Posterior vena cava (tissue), 2 donors: ENCODE measurements at regions of chr13 and their contacts with region 1.

Region 1: DNA sequence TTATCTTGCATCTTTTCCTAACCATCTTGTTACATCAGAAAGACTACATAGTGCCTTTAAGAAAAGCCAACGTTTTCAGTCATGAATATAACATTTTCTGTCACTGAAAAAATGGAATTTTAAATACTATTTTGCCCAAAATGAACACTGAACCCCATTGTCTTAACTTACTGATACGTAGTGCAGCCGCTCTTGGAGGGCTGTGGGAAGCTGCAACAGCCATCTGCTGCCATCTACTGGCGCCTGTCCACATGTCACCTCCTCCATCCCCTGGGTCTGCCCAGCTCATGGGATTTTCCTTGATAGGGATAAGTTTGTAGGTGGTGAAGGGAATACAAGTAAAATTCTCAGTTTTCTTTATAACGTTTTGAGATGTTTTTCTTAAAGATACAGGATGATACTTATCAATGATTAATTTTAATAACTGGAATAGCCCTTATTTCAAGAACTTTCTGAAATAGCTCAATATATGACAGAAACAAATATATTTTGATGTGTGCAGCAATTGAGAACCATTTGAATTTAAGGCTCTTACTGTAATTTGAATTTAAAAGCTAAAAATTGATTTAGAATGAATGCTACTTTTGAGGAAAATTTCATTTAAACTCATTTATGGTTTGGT is 73.7 kb downstream of the GGACT start:
- DNase-seq: peak; percentile 93

Region 2: GRCh38 chr13:99656092-99656745 is 858.7 kb before region 1 on chr13:
- intact Hi-C with region 1: loop called (anchors 5 to 10 kb)
- DNase-seq: no peak

Region 3: GRCh38 chr13:99916366-99917103 is 598.4 kb before region 1 on chr13:
- intact Hi-C with region 1: loop called in 1 of 2 experiments (anchors 10 kb)
- DNase-seq: no peak

Region 4: DNA sequence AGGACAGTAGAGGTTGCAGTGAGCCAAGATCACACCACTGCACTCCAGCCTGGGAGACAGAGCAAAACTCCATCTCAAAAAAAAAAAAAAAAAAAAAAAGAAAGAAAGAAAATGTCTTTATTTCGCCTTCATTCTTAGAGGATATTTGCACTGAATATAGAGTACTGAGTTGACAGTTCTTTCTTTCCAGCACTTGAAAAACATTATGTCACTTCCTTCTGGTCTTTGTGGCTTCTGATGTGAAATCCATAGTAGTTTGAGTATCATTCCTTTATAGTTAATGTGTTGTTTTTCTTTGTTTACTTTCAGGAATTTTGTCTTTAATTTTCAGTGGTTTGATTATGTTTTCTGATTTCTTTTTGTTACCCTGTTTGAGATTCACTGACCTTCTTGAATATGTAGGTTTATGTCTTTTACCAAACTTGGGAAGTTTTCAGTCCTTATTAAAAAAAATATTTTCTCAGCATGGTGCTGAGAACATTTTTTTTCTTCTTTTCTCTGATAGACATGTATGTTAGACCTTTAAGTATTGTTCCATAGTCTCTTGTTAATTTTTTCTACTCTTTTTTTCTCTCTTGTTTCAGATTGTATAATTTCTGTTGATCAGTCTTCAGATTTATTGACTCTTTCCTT is 375.9 kb before region 1 on chr13:
- intact Hi-C with region 1: no loop called
- DNase-seq: no peak

Region 5: GRCh38 chr13:100235311-100235901 is 279.5 kb before region 1 on chr13:
- intact Hi-C with region 1: loop called in 1 of 2 experiments (anchors 10 kb)
- DNase-seq: no peak

Region 6: DNA sequence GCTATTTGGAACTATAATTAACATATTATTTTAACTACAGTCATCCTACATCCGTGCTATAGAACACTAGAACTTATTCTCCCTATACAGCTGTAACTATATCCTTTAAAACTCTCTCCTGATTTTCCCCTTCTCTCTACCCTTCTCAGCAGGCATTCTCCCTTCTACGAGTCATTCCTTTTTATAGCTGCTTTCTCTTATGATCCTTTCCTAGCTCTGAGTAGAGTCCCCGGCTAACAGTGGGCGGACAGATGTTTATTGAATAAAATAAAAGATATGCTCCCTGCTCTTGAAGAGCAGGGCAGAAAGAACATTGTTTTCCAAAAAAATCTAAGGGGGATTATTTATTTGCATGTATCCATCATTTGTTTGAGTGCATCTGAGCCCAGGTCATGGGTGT is 406.2 kb after region 1 on chr13:
- intact Hi-C with region 1: loop called in 1 of 2 experiments (anchors 5 kb)
- DNase-seq: no peak